ENCODE measurements at regions of chr2 and their contacts with region 1.

Region 1: DNA sequence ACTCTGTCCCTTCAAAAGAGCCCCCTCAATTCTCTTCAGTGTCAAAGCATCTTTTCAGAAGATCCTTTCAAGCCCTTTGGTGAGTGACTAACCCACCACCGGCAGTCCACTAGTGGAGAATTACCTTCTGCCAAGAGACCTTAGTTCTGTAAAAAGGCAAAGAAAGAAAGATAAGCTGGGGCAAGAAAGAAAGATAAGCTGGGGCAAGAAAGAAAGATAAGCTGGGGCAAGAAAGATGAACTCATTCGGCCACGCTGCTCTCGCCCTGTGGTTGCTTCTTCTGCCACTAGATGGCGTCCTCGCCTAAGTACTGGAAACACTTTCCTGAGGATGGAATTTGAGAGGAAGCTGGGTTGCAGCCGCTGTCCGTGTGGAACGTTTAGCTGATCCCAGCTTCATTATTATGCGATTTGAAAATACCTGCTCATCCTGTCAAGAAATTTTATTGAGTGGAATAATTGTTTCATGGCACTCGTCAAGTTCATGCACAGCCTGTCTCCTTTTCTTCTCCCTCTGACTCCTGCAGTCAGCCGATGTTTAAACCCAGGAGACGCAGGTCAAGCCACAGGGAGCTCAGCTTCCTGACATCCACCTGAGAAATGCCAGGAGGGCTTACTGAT is 17.3 kb upstream of the ANXA4 start:
- DNase-seq: peak; percentile 95
- H3K4me3 Mint-ChIP-seq: peak overlapping the region; percentile 61
- H3K27ac Mint-ChIP-seq: no peak overlapping the region
- H3K4me1 Mint-ChIP-seq: no peaks in the 10 kb centered on the region
- H3K27me3 Mint-ChIP-seq: no peaks in the 10 kb centered on the region

Region 2: DNA sequence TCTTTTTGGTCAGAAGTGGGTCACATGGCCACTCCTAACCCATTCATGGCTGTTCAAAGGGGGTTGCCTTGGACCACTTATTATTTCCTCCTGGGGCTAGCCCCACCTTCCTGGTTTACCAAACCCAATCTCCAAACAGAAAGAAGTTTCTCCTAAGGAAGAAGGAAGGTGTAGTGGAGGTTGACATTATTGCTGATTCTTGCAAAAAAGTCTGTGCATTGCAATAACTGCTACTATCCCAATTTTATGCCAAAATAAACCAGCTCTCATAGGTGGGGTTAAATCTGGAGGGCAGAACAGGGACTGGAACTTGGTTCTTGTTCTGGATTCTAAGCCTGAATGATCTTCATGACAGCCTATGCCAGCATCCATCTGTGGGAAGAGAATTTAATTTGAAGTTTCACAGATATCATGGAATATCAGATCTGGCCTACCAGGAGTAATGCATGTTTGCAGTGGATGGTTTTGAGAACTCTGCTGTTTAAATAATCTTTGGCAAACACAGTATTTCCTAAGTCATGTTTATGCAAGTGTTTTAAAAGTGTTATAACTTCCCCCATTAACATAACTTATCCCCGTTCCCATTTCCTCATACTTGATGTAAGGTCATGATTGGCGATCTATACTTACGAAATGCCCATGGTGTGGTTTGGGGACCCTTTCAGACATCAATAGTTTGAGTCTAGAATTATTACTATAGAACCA is 29.2 kb after region 1 on chr2:
- CTCF ChIA-PET with region 1: interaction called, 10 read pairs
- intact Hi-C with region 1: no loop called
- DNase-seq: no peak
- H3K4me3 Mint-ChIP-seq: no peak overlapping the region
- H3K27ac Mint-ChIP-seq: no peak overlapping the region
- H3K4me1 Mint-ChIP-seq: peaks cover 12% of the 10 kb centered on the region
- H3K27me3 Mint-ChIP-seq: no peaks in the 10 kb centered on the region

Region 3: DNA sequence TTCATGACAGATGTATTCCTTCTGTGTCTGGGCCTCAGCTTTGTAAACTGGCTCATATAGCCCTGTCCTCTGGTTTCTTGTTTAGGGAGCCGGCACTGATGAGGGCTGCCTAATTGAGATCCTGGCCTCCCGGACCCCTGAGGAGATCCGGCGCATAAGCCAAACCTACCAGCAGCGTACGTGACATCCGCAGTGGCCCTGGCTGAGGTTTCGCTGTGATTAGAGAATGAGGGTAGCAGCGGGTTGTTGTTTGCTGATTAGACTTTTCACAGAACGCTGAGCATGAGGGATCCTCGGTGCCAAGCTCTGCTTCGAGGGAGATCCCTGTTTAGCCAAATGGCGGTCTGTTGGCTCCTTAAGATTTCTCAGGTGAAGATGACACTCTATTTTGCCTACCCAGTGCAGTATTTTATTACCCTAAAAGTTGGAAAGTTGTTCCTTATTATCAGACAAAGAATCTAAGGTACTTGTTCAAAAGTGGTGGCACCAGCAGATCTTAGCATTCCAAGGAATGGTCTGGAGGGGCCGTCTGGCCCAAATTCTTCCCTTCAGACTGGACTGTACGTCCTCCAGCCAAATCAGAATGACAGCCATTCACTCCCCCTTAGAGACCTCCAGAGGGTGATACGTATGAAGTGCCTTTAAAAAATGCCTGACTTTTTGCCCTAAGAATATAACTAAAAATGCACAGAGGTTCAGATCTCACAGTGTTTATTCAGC is 83.3 kb after region 1 on chr2:
- CTCF ChIA-PET with region 1: interaction called, 18 read pairs
- intact Hi-C with region 1: no loop called
- DNase-seq: no peak
- H3K4me3 Mint-ChIP-seq: no peak overlapping the region
- H3K27ac Mint-ChIP-seq: no peak overlapping the region
- H3K4me1 Mint-ChIP-seq: peaks cover 13% of the 10 kb centered on the region
- H3K27me3 Mint-ChIP-seq: no peaks in the 10 kb centered on the region

Region 4: GRCh38 chr2:69863298-69863697 is 138.6 kb after region 1 on chr2:
- CTCF ChIA-PET with region 1: no interaction called
- intact Hi-C with region 1: no loop called
- DNase-seq: no peak
- H3K4me3 Mint-ChIP-seq: no peak overlapping the region
- H3K27ac Mint-ChIP-seq: no peak overlapping the region
- H3K4me1 Mint-ChIP-seq: no peaks in the 10 kb centered on the region
- H3K27me3 Mint-ChIP-seq: no peaks in the 10 kb centered on the region

Region 5: GRCh38 chr2:69893684-69894551 is 169.3 kb after region 1 on chr2 and contains the start of gene SNRNP27:
- CTCF ChIA-PET with region 1: interaction called, 14 read pairs
- intact Hi-C with region 1: no loop called
- DNase-seq: peak; percentile 91
- H3K4me3 Mint-ChIP-seq: peak within 1 kb of the TSS; percentile 98
- H3K27ac Mint-ChIP-seq: peak within 1 kb of the TSS; percentile 97
- H3K4me1 Mint-ChIP-seq: peaks cover 41% of the 10 kb centered on the region
- H3K27me3 Mint-ChIP-seq: no peaks in the 10 kb centered on the region
- total RNA-seq, gene SNRNP27: 56.7 to 64.6 TPM

Region 6: DNA sequence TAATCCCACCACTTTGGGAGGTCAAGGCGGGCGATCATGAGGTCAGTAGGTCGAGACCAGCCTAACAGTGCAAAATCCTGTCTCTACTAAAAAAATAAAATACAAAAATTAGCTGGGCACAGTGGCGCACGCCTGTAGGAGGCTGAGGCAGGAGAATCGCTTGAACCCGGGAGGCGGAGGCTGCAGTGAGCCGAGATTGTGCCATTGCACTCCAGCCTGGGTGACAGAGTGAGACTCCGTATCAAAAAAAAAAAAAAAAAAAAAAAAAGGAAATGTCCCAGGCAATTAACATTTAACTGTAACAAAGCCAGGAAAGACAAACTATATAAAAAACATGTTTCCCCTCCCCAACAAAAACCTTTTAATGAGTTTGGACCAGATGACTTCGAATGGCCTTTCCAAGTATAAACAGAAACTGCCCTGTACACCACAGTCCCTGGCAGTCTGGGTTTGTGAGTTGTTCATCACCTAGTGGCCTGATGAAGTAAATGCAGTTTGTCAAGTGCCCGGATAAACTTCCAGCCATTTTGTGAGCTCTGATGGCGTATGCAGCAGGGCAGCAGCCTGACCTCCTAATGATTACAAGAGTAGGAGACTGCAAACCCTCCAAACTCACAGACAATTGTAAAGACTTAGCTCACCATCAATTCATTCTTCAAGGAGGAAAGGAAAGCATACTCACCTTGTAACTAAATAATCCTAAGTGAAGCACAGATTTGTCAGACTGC is 346.1 kb after region 1 on chr2:
- CTCF ChIA-PET with region 1: interaction called, 4 read pairs
- intact Hi-C with region 1: loop called (anchors 2 kb)
- DNase-seq: peak; percentile 76
- H3K4me3 Mint-ChIP-seq: peak overlapping the region; percentile 54
- H3K27ac Mint-ChIP-seq: peak overlapping the region; percentile 94
- H3K4me1 Mint-ChIP-seq: peaks cover 57% of the 10 kb centered on the region
- H3K27me3 Mint-ChIP-seq: no peaks in the 10 kb centered on the region